ENCODE measurements at regions of chr9 and their contacts with region 1.

Region 1: DNA sequence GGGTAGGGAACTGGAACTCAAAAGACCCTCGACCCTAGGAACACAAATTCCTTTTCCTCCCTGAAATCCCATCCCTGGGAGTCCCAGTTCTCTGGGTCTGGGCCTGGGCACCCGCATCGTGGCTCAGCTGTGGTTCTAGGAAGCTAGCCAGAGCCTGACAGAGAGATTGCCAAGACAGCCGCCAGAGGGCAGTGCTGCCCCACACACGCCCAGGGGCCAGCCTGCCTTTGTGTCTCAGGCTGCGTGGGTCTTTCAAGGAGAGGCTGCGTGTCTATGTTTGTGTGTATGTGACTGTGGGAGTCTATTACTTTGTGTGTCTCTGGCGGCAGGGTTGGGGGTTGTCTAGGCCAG is 32.0 kb upstream of the TTLL11 start:
- DNase-seq: peak; percentile 84
- ATAC-seq: peak; percentile 80
- H3K4me3 Mint-ChIP-seq: no peak overlapping the region
- H3K27ac Mint-ChIP-seq: no peak overlapping the region
- H3K4me1 Mint-ChIP-seq: peaks cover 16% of the 10 kb centered on the region
- H3K27me3 Mint-ChIP-seq: peaks cover 39% of the 10 kb centered on the region
- CTCF ChIP-seq: peak; percentile 92

Region 2: GRCh38 chr9:122051351-122052321 is 73.5 kb before region 1 on chr9:
- CTCF ChIA-PET with region 1: no interaction called
- POLR2A ChIA-PET with region 1: no interaction called
- intact Hi-C with region 1: no loop called
- DNase-seq: peak; percentile 87
- ATAC-seq: peak; percentile 86
- H3K4me3 Mint-ChIP-seq: peak overlapping the region; percentile 8
- H3K27ac Mint-ChIP-seq: peak overlapping the region; percentile 72
- H3K4me1 Mint-ChIP-seq: peaks cover 21% of the 10 kb centered on the region
- H3K27me3 Mint-ChIP-seq: no peaks in the 10 kb centered on the region
- CTCF ChIP-seq: no peak

Region 3: DNA sequence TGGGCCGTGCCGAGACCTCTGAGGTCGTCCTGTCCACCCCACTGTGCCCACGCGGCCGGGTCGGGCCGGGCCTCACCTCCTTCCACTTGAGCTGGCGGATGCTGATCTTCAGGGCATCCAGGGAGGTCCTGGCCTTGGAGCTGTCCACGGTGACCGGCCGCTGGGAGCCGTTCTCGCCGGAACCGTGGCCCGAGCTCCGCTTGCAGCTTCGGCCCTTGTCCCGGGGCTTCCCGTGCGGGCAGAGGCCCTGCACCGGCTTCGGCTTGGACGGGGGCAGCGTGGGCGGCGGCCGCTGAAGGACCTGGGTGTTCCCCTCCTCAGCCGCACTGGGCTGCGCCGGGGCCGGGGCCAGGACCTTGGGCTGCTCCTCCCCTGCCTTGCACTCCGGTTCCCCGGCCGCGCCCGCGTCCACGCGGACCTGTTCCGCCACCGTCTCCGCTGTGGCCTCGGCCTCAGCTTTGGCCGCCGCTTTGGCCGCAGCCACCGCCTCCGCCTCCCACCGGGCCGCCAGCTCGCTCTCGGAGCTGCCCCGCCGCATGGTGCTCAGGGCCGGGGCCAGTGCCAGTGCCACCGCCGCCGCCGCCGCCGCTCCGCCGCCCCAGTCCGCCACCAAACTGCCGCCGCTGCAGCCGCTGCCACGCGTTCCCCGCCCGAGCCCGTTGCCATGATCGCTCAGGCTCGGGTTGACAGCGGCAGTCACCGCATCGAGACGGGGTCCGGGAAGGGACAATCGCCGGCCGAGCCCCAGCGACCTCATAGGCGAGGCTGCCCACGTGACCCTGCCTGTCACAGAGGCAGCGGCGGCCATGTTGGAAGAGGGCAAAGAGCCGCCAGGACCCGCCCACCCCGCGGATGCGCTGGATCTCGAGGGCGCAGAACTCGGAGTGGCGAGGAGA is 32.3 kb before region 1 on chr9 and contains the start of gene TTLL11:
- CTCF ChIA-PET with region 1: interaction called, 304 read pairs
- POLR2A ChIA-PET with region 1: no interaction called
- intact Hi-C with region 1: no loop called
- DNase-seq: peak; percentile 98
- ATAC-seq: peak; percentile 95
- H3K4me3 Mint-ChIP-seq: peak within 1 kb of the TSS; percentile 82
- H3K27ac Mint-ChIP-seq: peak within 1 kb of the TSS; percentile 53
- H3K4me1 Mint-ChIP-seq: peaks cover 25% of the 10 kb centered on the region
- H3K27me3 Mint-ChIP-seq: peaks cover 8% of the 10 kb centered on the region
- CTCF ChIP-seq: no peak
- total RNA-seq, gene TTLL11: 0.56 to 1.4 TPM

Region 4: GRCh38 chr9:122144836-122145591 is 19.9 kb after region 1 on chr9:
- CTCF ChIA-PET with region 1: interaction called, 16 read pairs
- POLR2A ChIA-PET with region 1: interaction called, 3 read pairs
- intact Hi-C with region 1: no loop called
- DNase-seq: no peak
- ATAC-seq: no peak
- H3K4me3 Mint-ChIP-seq: no peak overlapping the region
- H3K27ac Mint-ChIP-seq: no peak overlapping the region
- H3K4me1 Mint-ChIP-seq: no peaks in the 10 kb centered on the region
- H3K27me3 Mint-ChIP-seq: no peaks in the 10 kb centered on the region
- CTCF ChIP-seq: peak; percentile 16

Region 5: DNA sequence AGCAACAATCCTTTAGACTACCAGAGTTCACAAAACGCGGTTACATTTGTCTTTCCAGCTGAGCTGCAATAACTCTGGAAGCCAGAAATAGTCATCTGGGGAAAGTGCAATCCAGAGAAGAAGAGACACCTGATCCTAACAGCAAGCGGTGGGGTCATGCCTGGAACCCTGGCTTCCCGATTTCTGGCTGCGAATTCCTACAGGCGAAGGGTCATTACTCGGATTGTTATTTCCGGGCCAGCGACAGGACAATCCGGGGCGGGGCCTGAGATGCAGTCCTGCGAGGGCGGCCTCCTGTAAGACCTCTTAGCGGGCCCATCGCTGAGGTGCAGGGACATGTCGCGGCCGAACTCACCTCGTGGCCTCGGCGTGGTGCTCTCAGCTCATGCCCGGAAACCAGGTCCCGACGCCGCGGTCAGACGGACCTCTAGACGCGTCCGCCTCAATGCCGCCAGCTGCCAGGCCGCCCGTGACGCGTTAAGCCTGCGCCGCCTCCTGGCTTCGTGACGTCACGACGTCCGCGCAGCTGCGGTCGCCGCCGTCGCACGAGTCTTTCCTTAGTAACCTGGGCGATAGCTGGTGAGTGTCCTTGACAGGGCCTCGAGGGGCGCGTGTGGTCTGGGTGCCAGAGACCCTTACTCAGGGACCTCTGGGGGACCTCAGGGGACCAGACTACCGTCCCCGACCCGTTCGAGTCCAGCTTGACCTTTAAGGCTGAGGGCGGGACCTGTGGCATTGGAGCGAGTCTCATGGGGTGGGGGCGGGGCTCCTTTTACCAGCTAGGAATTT is 139.4 kb after region 1 on chr9 and contains the starts of genes MRRF and RBM18:
- CTCF ChIA-PET with region 1: interaction called, 10 read pairs
- POLR2A ChIA-PET with region 1: interaction called, 3 read pairs
- intact Hi-C with region 1: no loop called
- DNase-seq: peak; percentile 92
- ATAC-seq: peak; percentile 81
- H3K4me3 Mint-ChIP-seq: peak within 1 kb of the TSS; percentile 84
- H3K27ac Mint-ChIP-seq: peak within 1 kb of the TSS; percentile 100
- H3K4me1 Mint-ChIP-seq: peaks cover 41% of the 10 kb centered on the region
- H3K27me3 Mint-ChIP-seq: no peaks in the 10 kb centered on the region
- CTCF ChIP-seq: no peak
- total RNA-seq, gene MRRF: 69.8 to 76.0 TPM
- total RNA-seq, gene RBM18: 24.3 to 28.6 TPM

Measured in activated CD8-positive, alpha-beta T cell treated with anti-CD3 and anti-CD28 coated beads for 36 hours (primary cell).